Ascending aorta (tissue), 2 donors: ENCODE measurements at regions of chr1 and their contacts with region 1.

Region 1: GRCh38 chr1:100132566-100133477 is at the starts of genes SASS6 and TRMT13:
- DNase-seq: peak; percentile 79 to 98
- H3K4me3 ChIP-seq: peak within 1 kb of the TSS; percentile 73 to 80
- H3K27ac ChIP-seq: peak within 1 kb of the TSS; percentile 35 to 53
- H3K4me1 ChIP-seq: peaks cover 0 to 12% of the 10 kb centered on the region in 2 donors
- H3K27me3 ChIP-seq: no peaks in the 10 kb centered on the region
- CTCF ChIP-seq: no peak
- total RNA-seq, gene SASS6: 7.0 TPM
- total RNA-seq, gene TRMT13: 11.4 TPM

Region 2: GRCh38 chr1:99098589-99098988 is 1034.2 kb before region 1 on chr1:
- intact Hi-C with region 1: no loop called
- DNase-seq: no peak
- H3K4me3 ChIP-seq: no peak overlapping the region
- H3K27ac ChIP-seq: no peak overlapping the region
- H3K4me1 ChIP-seq: no peaks in the 10 kb centered on the region
- H3K27me3 ChIP-seq: no peaks in the 10 kb centered on the region
- CTCF ChIP-seq: no peak

Region 3: DNA sequence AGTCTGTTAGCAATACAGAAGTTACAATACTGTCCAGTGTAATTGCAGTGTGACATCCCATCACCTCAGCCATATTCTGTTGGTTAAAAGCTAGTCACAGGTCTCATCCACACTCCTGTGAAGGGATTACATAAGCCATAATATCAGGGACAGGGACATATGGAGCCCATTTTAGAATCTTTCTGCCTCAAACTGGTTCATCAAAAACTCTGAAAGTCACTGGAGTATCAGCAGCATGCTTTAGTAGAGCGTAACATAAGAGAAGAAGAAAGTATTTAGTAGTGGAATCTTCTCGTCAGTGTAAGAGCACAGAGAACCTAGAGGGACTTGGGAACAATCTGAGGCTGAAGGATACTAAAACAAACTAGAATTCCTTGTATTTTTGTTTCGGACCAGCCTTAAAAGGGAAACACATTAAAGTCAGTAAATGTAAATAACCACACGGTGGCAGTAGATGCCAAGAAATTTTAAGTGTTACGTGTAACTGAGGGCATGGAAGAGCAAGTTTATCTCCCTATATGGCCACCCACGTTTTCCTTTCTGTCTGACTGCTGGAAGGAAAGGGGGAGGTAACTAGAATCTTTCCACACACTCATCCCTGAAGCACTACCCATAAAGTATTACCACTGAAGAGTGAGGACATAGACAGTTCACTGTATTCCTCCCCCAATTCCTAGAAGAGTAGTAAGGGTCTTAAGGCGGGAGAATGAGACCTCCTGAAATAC is 324.3 kb before region 1 on chr1:
- intact Hi-C with region 1: loop called (anchors 2 kb)
- DNase-seq: peak in 1 of 2 donors; percentile 62
- H3K4me3 ChIP-seq: peak overlapping the region in 1 of 2 donors; percentile 52
- H3K27ac ChIP-seq: no peak overlapping the region
- H3K4me1 ChIP-seq: peaks cover 0 to 3% of the 10 kb centered on the region in 2 donors
- H3K27me3 ChIP-seq: no peaks in the 10 kb centered on the region
- CTCF ChIP-seq: peak; percentile 54 to 64 (median 63)

Region 4: DNA sequence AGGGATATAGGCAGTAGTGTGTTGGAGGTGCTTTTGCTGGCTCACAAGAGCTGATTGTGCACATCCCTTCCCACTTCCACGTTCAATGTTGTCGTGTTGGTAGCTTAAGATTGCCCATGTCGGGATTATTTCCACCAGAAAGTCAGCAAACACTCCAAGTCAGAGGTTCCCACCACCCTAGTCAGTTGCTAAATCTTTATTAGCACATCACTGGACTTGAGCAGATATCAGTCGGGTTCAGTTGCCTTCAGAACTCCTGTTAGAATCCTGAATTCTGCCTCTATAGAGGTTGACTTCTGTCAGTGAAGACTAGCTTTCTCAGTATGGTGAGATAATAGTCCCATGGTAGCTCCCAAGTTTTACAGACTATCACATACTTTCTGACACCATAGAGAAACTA is 272.1 kb before region 1 on chr1:
- intact Hi-C with region 1: no loop called
- DNase-seq: no peak
- H3K4me3 ChIP-seq: no peak overlapping the region
- H3K27ac ChIP-seq: no peak overlapping the region
- H3K4me1 ChIP-seq: no peaks in the 10 kb centered on the region
- H3K27me3 ChIP-seq: no peaks in the 10 kb centered on the region
- CTCF ChIP-seq: no peak

Region 5: GRCh38 chr1:99969729-99970621 is 162.8 kb before region 1 on chr1 and contains the start of gene SLC35A3:
- intact Hi-C with region 1: loop called (anchors 5 kb)
- DNase-seq: peak; percentile 9 to 85
- H3K4me3 ChIP-seq: peak within 1 kb of the TSS; percentile 82 to 85
- H3K27ac ChIP-seq: peak within 1 kb of the TSS; percentile 66 to 76
- H3K4me1 ChIP-seq: peaks cover 2 to 4% of the 10 kb centered on the region in 2 donors
- H3K27me3 ChIP-seq: no peaks in the 10 kb centered on the region
- CTCF ChIP-seq: no peak
- total RNA-seq, gene SLC35A3: 8.4 TPM

Region 6: DNA sequence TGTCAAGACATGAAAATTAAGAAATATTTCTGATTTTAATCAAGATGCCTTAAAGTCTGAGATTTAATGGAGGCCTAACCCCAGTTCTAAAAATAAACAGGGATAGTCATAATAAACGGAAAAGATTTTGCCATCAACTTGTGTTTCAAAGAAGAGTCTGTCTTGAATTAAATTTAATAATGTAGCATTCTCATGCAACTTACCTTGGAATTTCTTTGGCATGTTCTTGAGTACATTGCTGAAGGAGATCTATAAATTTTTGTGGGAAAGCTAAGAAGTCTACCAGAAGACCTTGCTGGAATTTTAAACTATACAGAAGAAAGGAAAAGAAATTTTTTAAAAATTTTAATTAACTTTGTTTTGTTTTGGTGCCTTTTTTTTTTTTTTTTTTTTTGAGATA is 10.6 kb before region 1 on chr1:
- intact Hi-C with region 1: loop called (anchors 2 kb)
- DNase-seq: no peak
- H3K4me3 ChIP-seq: no peak overlapping the region
- H3K27ac ChIP-seq: no peak overlapping the region
- H3K4me1 ChIP-seq: no peaks in the 10 kb centered on the region
- H3K27me3 ChIP-seq: no peaks in the 10 kb centered on the region
- CTCF ChIP-seq: no peak

Region 7: DNA sequence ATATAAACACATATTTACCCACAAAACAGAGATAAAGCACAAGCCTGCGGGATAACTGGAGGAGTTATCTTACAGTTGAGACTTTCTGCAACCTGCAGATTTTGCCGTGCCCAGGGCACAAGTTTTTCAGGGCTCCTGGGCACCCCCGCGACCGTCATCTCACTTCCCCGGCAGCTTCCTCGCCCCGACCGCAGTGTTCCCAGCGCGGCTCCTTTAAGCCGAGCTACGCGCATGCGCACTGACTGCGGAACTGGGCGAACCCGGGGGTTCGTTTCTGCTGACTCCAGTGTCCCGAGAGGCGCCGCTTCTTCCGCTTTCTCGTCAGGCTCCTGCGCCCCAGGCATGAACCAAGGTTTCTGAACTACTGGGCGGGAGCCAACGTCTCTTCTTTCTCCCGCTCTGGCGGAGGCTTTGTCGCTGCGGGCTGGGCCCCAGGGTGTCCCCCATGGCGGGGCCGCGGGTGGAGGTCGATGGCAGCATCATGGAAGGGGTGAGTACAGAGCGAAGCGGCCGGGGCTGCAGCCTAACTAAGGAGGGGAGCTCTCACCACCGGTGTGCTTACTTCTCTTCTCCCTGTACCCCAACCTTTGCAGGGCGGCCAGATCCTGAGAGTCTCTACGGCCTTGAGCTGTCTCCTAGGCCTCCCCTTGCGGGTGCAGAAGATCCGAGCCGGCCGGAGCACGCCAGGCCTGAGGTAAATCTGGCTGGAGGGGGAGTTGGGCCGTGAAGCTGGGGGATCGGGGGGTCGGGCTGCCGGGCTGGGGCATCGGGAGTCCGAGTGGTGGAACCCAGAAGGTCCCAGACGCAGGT is 133.3 kb after region 1 on chr1 and contains the start of gene RTCA:
- intact Hi-C with region 1: loop called (anchors 2 kb)
- DNase-seq: peak; percentile 84 to 98
- H3K4me3 ChIP-seq: peak within 1 kb of the TSS; percentile 92 to 98
- H3K27ac ChIP-seq: peak within 1 kb of the TSS; percentile 76 to 84
- H3K4me1 ChIP-seq: peaks cover 3 to 17% of the 10 kb centered on the region in 2 donors
- H3K27me3 ChIP-seq: no peaks in the 10 kb centered on the region
- CTCF ChIP-seq: no peak
- total RNA-seq, gene RTCA: 2.8 TPM

Region 8: DNA sequence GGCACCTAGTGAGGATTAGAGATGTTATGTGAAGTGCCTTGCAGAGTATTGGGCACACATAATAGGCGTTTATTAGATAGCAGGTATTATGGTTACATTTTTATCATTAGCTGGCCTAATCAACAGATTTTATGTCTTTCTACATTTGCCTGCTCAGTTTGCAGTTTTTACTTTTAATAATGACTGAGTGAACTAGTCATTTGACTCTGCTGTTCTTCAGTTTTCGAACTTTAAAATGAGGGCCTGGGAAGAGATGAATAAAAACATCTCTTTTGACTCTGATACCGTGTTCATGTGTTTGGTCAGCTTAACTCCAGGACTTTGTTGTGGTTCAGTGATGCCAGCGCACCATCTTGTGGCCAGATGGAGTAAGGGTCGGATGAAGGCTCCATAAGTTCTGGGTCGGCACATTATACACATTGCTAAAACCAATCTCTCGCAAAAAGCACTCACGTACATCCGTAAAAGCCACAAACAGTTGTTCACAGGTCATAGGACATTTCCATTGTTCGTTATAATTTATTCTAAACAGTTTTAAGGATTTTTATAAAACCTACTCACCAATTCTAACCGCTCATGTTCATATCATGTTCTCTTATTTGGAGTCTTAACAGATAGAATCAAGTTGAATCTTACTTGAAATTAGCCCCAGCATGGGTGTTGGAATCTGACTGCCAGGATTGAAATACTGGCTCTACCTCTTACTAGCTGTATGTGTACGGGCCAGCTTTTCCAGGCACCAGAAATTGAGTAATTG is 326.7 kb after region 1 on chr1:
- intact Hi-C with region 1: loop called (anchors 2 kb)
- DNase-seq: peak in 1 of 2 donors; percentile 83
- H3K4me3 ChIP-seq: no peak overlapping the region
- H3K27ac ChIP-seq: no peak overlapping the region
- H3K4me1 ChIP-seq: no peaks in the 10 kb centered on the region
- H3K27me3 ChIP-seq: no peaks in the 10 kb centered on the region
- CTCF ChIP-seq: peak; percentile 60 to 84 (median 73)